ENCODE measurements at regions of chr15 and their contacts with region 1.

Region 1: GRCh38 chr15:73704869-73705645 is 20.9 kb downstream of the CD276 start:
- DNase-seq: peak; percentile 37 to 74 (median 58)
- ATAC-seq: peak; percentile 83
- H3K4me3 ChIP-seq: no peak overlapping the region
- H3K4me3 Mint-ChIP-seq: no peak overlapping the region
- H3K27ac ChIP-seq: no peak overlapping the region
- H3K27ac Mint-ChIP-seq: no peak overlapping the region
- H3K4me1 ChIP-seq: no peaks in the 10 kb centered on the region
- H3K4me1 Mint-ChIP-seq: peaks cover 4% of the 10 kb centered on the region
- H3K27me3 ChIP-seq: no peaks in the 10 kb centered on the region
- H3K27me3 Mint-ChIP-seq: peaks cover 28% of the 10 kb centered on the region
- CTCF ChIP-seq: peak; percentile 66

Region 2: DNA sequence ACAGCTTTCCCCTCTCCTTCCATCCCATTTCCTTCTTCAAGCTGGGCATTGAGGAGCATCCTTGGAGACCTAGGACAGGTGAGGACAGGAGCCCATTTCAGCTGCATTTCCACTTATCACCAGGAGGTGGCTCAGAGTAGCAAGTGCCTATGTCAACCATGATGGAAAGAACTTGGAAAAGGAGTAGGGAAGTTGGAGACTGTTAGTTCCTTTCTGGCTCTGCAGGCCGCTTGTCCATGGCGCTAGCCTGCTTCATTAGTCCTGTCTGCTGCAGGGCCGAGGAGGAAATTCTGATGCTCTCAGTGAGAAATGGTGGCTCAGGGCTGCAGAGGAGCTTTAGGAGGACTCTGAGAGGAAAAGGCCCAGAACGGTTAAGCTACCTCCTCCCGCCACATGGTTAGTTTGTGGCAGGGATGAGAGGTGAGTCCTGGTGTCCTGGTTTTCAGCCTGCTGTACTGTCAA is 27.9 kb before region 1 on chr15:
- CTCF ChIA-PET with region 1: interaction called, 184 read pairs
- POLR2A ChIA-PET with region 1: interaction called, 4 read pairs
- intact Hi-C with region 1: loop called (anchors 1 kb)
- DNase-seq: peak; percentile 22 to 72 (median 55)
- ATAC-seq: no peak
- H3K4me3 ChIP-seq: no peak overlapping the region
- H3K4me3 Mint-ChIP-seq: no peak overlapping the region
- H3K27ac ChIP-seq: no peak overlapping the region
- H3K27ac Mint-ChIP-seq: no peak overlapping the region
- H3K4me1 ChIP-seq: no peaks in the 10 kb centered on the region
- H3K4me1 Mint-ChIP-seq: no peaks in the 10 kb centered on the region
- H3K27me3 ChIP-seq: peaks cover 0 to 9% of the 10 kb centered on the region in 2 experiments
- H3K27me3 Mint-ChIP-seq: peaks cover 34% of the 10 kb centered on the region
- CTCF ChIP-seq: peak; percentile 81

Region 3: DNA sequence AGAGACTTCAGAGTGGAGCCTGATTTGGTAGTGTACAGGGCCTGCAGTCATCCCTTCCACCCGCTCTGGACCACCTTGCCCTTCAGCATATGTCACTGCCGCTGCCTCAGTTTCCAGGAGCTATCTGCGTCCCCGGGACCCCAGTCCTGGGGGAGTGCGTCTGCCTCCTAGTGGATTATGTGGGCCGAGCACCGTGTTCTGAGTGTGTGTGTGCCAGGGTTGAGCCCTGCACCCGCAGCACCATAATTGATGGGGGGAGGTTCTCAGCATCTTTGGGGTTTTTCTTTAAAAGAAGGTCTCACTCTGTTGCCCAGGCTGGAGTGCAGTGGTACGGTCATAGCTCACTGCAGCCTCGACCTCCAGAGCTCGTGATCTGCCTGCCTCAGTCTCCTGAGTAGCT is 12.7 kb after region 1 on chr15:
- CTCF ChIA-PET with region 1: interaction called, 16 read pairs
- POLR2A ChIA-PET with region 1: no interaction called
- intact Hi-C with region 1: no loop called
- DNase-seq: no peak
- ATAC-seq: no peak
- H3K4me3 ChIP-seq: no peak overlapping the region
- H3K4me3 Mint-ChIP-seq: no peak overlapping the region
- H3K27ac ChIP-seq: no peak overlapping the region
- H3K27ac Mint-ChIP-seq: no peak overlapping the region
- H3K4me1 ChIP-seq: no peaks in the 10 kb centered on the region
- H3K4me1 Mint-ChIP-seq: no peaks in the 10 kb centered on the region
- H3K27me3 ChIP-seq: no peaks in the 10 kb centered on the region
- H3K27me3 Mint-ChIP-seq: peaks cover 19% of the 10 kb centered on the region
- CTCF ChIP-seq: no peak

Region 4: DNA sequence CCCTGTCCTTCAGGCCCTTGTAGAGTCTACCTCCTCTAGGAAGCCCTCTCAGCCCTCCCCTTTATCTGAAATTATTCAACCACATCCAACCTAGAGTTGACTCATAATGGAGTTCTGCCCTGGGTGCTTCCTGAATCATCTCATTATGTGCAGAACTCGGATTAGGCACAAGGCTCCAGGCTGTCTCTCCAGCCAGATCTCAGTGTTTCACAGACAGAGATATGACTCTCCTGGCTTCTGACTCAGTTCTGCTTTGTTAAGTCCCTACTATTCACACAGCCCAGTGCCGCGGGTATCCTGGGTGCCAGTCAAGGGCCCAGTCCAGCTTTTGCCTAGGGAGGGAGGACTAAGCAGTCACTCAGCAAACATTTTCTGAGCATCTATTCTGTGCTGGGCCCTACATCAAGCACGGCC is 488.3 kb after region 1 on chr15:
- CTCF ChIA-PET with region 1: no interaction called
- POLR2A ChIA-PET with region 1: no interaction called
- intact Hi-C with region 1: no loop called
- DNase-seq: no peak
- ATAC-seq: no peak
- H3K4me3 ChIP-seq: no peak overlapping the region
- H3K4me3 Mint-ChIP-seq: no peak overlapping the region
- H3K27ac ChIP-seq: no peak overlapping the region
- H3K27ac Mint-ChIP-seq: no peak overlapping the region
- H3K4me1 ChIP-seq: no peaks in the 10 kb centered on the region
- H3K4me1 Mint-ChIP-seq: no peaks in the 10 kb centered on the region
- H3K27me3 ChIP-seq: no peaks in the 10 kb centered on the region
- H3K27me3 Mint-ChIP-seq: no peaks in the 10 kb centered on the region
- CTCF ChIP-seq: no peak

Measured in CD8-positive, alpha-beta T cell (primary cell).